OCI-LY7 (cell line): ENCODE measurements at regions of chr1 and their contacts with region 1.

Region 1: GRCh38 chr1:66402194-66402593 is 131.8 kb upstream of the SGIP1 start:
- DNase-seq: peak; percentile 99
- H3K4me3 ChIP-seq: peak overlapping the region; percentile 49
- H3K27ac ChIP-seq: peak overlapping the region; percentile 93
- H3K4me1 ChIP-seq: peaks cover 81% of the 10 kb centered on the region
- CTCF ChIP-seq: no peak

Region 2: DNA sequence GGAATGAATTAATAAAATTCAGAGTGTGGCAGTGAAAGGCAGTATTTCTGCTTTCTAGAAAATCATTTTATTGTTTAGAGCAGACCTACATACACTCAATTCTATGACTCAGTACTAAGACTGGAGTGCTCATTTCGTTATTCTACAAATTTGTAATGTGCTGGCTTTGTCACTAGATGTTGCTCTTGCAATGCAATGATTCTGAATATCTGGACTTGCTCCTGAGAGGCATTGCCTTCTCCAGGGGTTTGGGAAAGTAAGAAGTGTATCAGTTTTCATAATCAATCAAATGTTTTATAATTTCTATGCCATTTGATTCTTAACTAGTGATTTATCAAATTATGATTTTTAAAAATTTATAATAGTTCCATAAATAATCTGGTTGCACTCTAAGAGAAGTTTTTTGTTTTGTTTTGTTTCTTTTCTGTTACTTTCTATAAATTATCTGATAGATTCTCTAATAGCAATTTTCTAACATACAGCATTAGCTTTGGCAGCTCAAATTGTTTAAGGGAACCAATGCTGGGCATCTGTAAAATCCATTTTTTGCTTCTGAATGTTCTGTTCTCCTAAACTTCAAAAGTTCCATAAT is 148.8 kb before region 1 on chr1:
- CTCF ChIA-PET with region 1: interaction called, 4 read pairs
- POLR2A ChIA-PET with region 1: interaction called, 4 read pairs
- intact Hi-C with region 1: loop called (anchors 1 kb)
- DNase-seq: peak; percentile 74
- H3K4me3 ChIP-seq: no peak overlapping the region
- H3K27ac ChIP-seq: no peak overlapping the region
- H3K4me1 ChIP-seq: peaks cover 18% of the 10 kb centered on the region
- CTCF ChIP-seq: peak; percentile 98

Region 3: GRCh38 chr1:66282343-66282852 is 119.8 kb before region 1 on chr1:
- CTCF ChIA-PET with region 1: no interaction called
- POLR2A ChIA-PET with region 1: interaction called, 9 read pairs
- intact Hi-C with region 1: loop called (anchors 2 kb)
- DNase-seq: peak; percentile 85
- H3K4me3 ChIP-seq: peak overlapping the region; percentile 32
- H3K27ac ChIP-seq: peak overlapping the region; percentile 59
- H3K4me1 ChIP-seq: peaks cover 73% of the 10 kb centered on the region
- CTCF ChIP-seq: peak; percentile 62

Region 4: DNA sequence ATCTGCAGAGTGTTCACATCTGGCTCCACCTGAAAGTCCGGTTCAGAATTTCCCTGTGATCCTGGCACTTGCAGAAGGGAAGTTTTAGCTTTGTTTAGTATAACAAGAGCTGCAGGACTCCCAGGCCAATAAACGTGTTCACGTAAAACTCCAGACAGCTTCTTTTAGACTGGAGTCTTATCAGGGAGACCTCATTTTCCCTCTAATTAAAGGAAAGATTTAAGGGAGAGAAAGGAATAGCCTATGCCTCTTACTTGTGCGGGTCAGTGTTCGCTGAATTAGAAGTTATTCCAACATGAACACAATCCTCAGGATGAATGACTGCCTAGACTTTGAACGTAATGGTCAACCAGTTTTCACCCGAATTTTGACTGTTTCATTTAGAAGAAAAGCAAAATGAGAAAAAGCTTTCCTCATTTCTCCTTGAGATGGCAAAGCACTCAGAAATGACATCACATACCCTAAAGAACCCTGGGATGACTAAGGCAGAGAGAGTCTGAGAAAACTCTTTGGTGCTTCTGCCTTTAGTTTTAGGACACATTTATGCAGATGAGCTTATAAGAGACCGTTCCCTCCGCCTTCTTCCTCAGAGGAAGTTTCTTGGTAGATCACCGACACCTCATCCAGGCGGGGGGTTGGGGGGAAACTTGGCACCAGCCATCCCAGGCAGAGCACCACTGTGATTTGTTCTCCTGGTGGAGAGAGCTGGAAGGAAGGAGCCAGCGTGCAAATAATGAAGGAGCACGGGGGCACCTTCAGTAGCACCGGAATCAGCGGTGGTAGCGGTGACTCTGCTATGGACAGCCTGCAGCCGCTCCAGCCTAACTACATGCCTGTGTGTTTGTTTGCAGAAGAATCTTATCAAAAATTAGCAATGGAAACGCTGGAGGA is 70.3 kb before region 1 on chr1:
- CTCF ChIA-PET with region 1: interaction called, 3 read pairs
- POLR2A ChIA-PET with region 1: interaction called, 10 read pairs
- intact Hi-C with region 1: loop called (anchors 2 kb)
- DNase-seq: peak; percentile 61
- H3K4me3 ChIP-seq: peak overlapping the region; percentile 77
- H3K27ac ChIP-seq: peak overlapping the region; percentile 93
- H3K4me1 ChIP-seq: peaks cover 71% of the 10 kb centered on the region
- CTCF ChIP-seq: no peak

Region 5: GRCh38 chr1:66342707-66343106 is 59.5 kb before region 1 on chr1:
- CTCF ChIA-PET with region 1: no interaction called
- POLR2A ChIA-PET with region 1: interaction called, 20 read pairs
- intact Hi-C with region 1: loop called (anchors 2 kb)
- DNase-seq: peak; percentile 70
- H3K4me3 ChIP-seq: peak overlapping the region; percentile 51
- H3K27ac ChIP-seq: peak overlapping the region; percentile 47
- H3K4me1 ChIP-seq: peaks cover 75% of the 10 kb centered on the region
- CTCF ChIP-seq: 0 out of 2 replicates have a peak, but pooled peaks have one; percentile 13

Region 6: DNA sequence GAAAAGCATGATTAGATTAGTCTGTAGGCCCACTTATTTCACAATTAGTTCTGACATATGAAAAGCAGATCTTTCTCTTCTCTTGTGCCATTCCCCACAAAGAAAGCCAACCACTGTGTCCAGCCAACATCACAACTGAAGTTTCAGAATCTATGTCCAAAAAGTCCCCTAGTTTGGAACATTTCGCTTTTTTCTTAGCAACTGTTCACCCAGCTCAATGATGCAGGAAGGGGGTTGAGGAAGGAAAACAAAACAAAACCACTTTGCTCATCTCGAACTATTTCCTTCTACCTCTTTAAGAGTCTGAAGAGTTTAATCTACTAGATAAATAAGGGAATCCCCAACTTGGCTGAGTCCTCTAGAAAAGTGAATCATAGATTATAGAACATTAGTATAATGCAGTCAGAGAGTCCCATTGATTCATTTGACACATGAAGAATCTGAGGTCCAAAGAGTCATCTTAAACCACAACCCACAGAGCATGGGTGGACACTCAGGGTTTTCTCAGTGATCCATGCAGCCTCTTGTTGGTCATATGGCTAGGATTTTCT is 27.6 kb before region 1 on chr1:
- CTCF ChIA-PET with region 1: interaction called, 3 read pairs
- POLR2A ChIA-PET with region 1: interaction called, 16 read pairs
- intact Hi-C with region 1: no loop called
- DNase-seq: peak; percentile 41
- H3K4me3 ChIP-seq: peak overlapping the region; percentile 38
- H3K27ac ChIP-seq: peak overlapping the region; percentile 57
- H3K4me1 ChIP-seq: peaks cover 61% of the 10 kb centered on the region
- CTCF ChIP-seq: no peak

Region 7: GRCh38 chr1:66380452-66381212 is 21.6 kb before region 1 on chr1:
- CTCF ChIA-PET with region 1: no interaction called
- POLR2A ChIA-PET with region 1: interaction called, 16 read pairs
- intact Hi-C with region 1: loop called (anchors 1 kb)
- DNase-seq: peak; percentile 88
- H3K4me3 ChIP-seq: peak overlapping the region; percentile 42
- H3K27ac ChIP-seq: peak overlapping the region; percentile 67
- H3K4me1 ChIP-seq: peaks cover 39% of the 10 kb centered on the region
- CTCF ChIP-seq: no peak

Region 8: GRCh38 chr1:66831529-66832239 is 429.5 kb after region 1 on chr1:
- CTCF ChIA-PET with region 1: no interaction called
- POLR2A ChIA-PET with region 1: no interaction called
- intact Hi-C with region 1: no loop called
- DNase-seq: no peak
- H3K4me3 ChIP-seq: no peak overlapping the region
- H3K27ac ChIP-seq: no peak overlapping the region
- H3K4me1 ChIP-seq: no peaks in the 10 kb centered on the region
- CTCF ChIP-seq: no peak